Activated CD4-positive, alpha-beta T cell treated with anti-CD3 and anti-CD28 coated beads for 36 hours (primary cell): ENCODE measurements at regions of chrX and their contacts with region 1.

Region 1: GRCh38 chrX:85851418-85851817 is 195.9 kb downstream of the CHM start:
- DNase-seq: peak; percentile 34
- ATAC-seq: no peak
- H3K4me3 Mint-ChIP-seq: no peak overlapping the region
- H3K27ac Mint-ChIP-seq: no peak overlapping the region
- H3K4me1 Mint-ChIP-seq: no peaks in the 10 kb centered on the region
- H3K27me3 Mint-ChIP-seq: no peaks in the 10 kb centered on the region

Region 2: GRCh38 chrX:86066997-86067396 is 215.6 kb after region 1 on chrX:
- CTCF ChIA-PET with region 1: no interaction called
- POLR2A ChIA-PET with region 1: no interaction called
- intact Hi-C with region 1: loop called in 1 of 2 experiments (anchors 10 kb)
- DNase-seq: no peak
- ATAC-seq: no peak
- H3K4me3 Mint-ChIP-seq: no peak overlapping the region
- H3K27ac Mint-ChIP-seq: no peak overlapping the region
- H3K4me1 Mint-ChIP-seq: no peaks in the 10 kb centered on the region
- H3K27me3 Mint-ChIP-seq: no peaks in the 10 kb centered on the region

Region 3: GRCh38 chrX:86171366-86171765 is 319.9 kb after region 1 on chrX:
- CTCF ChIA-PET with region 1: no interaction called
- POLR2A ChIA-PET with region 1: no interaction called
- intact Hi-C with region 1: loop called in 1 of 2 experiments (anchors 5 kb)
- DNase-seq: peak; percentile 5
- ATAC-seq: no peak
- H3K4me3 Mint-ChIP-seq: no peak overlapping the region
- H3K27ac Mint-ChIP-seq: no peak overlapping the region
- H3K4me1 Mint-ChIP-seq: no peaks in the 10 kb centered on the region
- H3K27me3 Mint-ChIP-seq: peaks cover 4% of the 10 kb centered on the region